Activated naive CD8-positive, alpha-beta T cell treated with anti-CD3 and anti-CD28 coated beads, Interleukin-2, amount 10 ng/mL, durations not matched to agents 7 days and 5 days (primary cell): ENCODE measurements at regions of chr11 and their contacts with region 1.

Region 1: DNA sequence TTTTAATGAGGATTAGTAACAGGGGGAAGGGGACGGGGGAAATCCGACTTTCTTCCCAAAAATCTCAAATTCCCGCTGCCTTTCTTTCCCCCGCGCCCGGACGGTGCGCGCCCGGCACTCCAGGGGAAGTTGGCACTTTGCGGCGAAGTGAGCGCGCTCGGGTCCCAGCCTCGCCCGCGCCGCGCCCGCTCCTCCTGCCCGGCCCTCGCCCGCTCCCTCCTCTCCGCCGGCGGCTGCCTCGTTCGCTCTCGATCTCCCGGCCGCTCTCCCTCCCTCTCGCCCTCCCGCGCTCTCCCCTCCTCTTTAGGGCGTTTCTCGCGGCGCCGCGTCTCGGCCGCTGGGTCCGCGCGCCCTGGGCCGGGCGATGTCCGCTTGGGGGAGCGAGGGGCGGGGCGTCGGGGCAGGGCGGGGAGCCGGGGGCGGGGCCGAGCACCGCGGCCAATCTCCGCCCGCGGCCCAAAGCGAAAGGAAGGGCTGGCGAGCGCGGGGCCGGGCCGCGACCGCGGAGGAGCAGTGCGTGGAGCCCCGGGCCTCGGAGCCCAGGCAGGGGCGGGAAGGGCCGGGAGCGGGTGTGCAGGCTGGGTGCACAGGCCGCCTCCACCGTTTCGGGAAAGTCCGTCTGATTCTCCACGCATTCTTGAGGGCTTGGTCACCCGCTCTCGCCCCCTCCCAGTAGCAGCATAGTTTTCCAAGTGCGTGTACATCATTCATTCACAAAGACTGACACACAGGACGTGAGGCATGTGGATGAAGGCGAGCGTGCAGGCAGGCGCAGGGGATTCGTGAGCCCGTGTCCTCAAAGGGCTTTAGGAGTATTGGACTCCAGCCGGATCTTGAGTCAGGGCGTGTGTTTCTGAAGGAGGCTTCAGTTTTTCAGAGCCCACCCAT is 65.1 kb downstream of the ETS1 start:
- DNase-seq: peak; percentile 95
- ATAC-seq: peak; percentile 79
- H3K4me3 Mint-ChIP-seq: peak overlapping the region; percentile 98
- H3K27ac Mint-ChIP-seq: peak overlapping the region; percentile 97
- H3K4me1 Mint-ChIP-seq: peaks cover 45% of the 10 kb centered on the region
- H3K27me3 Mint-ChIP-seq: no peaks in the 10 kb centered on the region

Region 2: DNA sequence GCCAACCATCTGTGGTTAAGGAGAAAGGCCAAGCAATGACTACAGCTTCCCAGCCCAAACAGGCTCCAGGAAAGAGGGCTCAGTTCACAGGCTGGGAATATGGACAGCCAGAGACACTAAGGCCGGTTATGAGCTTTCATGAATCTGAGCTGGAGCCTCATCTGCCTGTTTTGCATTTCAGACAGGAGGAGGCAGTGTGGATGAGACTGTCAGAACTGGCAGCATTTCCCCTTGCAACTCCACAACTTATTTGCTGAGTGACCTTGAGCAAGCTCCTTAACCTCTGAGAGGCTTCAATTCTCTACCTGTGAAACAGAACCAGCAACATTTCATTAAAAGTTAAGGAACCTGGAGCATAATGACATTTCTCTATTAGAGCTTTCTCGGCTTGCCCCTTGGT is 198.9 kb before region 1 on chr11:
- POLR2A ChIA-PET with region 1: interaction called, 16 read pairs
- DNase-seq: no peak
- ATAC-seq: peak; percentile 17
- H3K4me3 Mint-ChIP-seq: peak overlapping the region; percentile 84
- H3K27ac Mint-ChIP-seq: peak overlapping the region; percentile 98
- H3K4me1 Mint-ChIP-seq: peaks cover 79% of the 10 kb centered on the region
- H3K27me3 Mint-ChIP-seq: no peaks in the 10 kb centered on the region

Region 3: GRCh38 chr11:128482512-128483191 is 39.6 kb before region 1 on chr11:
- POLR2A ChIA-PET with region 1: interaction called, 716 read pairs
- DNase-seq: no peak
- ATAC-seq: peak; percentile 61
- H3K4me3 Mint-ChIP-seq: peak overlapping the region; percentile 86
- H3K27ac Mint-ChIP-seq: peak overlapping the region; percentile 97
- H3K4me1 Mint-ChIP-seq: peaks cover 88% of the 10 kb centered on the region
- H3K27me3 Mint-ChIP-seq: no peaks in the 10 kb centered on the region

Region 4: GRCh38 chr11:128506999-128507611 is 15.2 kb before region 1 on chr11:
- POLR2A ChIA-PET with region 1: interaction called, 327 read pairs
- DNase-seq: no peak
- ATAC-seq: peak; percentile 3
- H3K4me3 Mint-ChIP-seq: peak overlapping the region; percentile 98
- H3K27ac Mint-ChIP-seq: peak overlapping the region; percentile 89
- H3K4me1 Mint-ChIP-seq: peaks cover 87% of the 10 kb centered on the region
- H3K27me3 Mint-ChIP-seq: no peaks in the 10 kb centered on the region

Region 5: GRCh38 chr11:128610721-128611617 is 88.7 kb after region 1 on chr11:
- POLR2A ChIA-PET with region 1: interaction called, 10 read pairs
- DNase-seq: peak; percentile 63
- ATAC-seq: peak; percentile 94
- H3K4me3 Mint-ChIP-seq: peak overlapping the region; percentile 75
- H3K27ac Mint-ChIP-seq: peak overlapping the region; percentile 90
- H3K4me1 Mint-ChIP-seq: peaks cover 32% of the 10 kb centered on the region
- H3K27me3 Mint-ChIP-seq: no peaks in the 10 kb centered on the region

Region 6: GRCh38 chr11:128630367-128631230 is 108.3 kb after region 1 on chr11:
- POLR2A ChIA-PET with region 1: interaction called, 56 read pairs
- DNase-seq: peak; percentile 93
- ATAC-seq: peak; percentile 75
- H3K4me3 Mint-ChIP-seq: peak overlapping the region; percentile 84
- H3K27ac Mint-ChIP-seq: peak overlapping the region; percentile 93
- H3K4me1 Mint-ChIP-seq: peaks cover 63% of the 10 kb centered on the region
- H3K27me3 Mint-ChIP-seq: no peaks in the 10 kb centered on the region